Activated naive CD8-positive, alpha-beta T cell treated with anti-CD3 and anti-CD28 coated beads, Interleukin-2, amount 10 ng/mL, durations not matched to agents 7 days and 5 days (primary cell): ENCODE measurements at regions of chr17 and their contacts with region 1.

Region 1: DNA sequence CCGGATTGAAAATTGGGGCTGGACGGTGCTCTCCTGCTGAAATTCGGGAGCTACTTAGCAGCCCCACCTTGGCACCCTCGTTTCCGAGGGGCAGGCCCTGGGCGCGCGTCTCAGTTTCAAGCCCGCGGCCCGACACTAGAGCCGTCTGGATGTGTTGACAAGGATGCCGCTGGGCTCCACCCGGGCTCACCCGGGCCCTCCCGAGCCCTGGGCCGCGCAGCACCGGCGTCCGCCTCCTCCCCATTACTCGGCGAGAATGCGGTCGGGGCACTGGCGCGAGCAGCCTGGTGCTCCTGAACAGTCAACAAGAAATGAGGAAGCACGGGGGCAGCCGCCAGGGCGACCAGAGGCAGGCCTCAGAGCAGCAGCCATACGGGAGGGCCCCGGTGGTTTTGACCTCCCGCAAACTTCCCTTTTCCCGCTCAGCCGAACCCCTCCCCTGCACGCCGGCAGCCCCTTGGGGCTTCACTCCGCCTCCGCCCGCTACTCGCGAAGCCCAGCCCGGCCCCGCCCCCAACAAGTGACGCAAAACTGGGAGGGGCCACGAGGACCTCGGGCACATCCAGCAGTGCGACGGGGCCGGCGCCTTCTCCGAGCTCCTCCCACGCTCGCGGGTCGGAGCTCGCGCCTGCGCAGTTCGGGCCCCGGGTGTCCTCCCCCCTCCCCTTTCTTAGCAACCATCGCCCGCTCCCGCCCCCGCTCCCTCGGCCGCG is 447 bp upstream of the SEC14L1 start:
- DNase-seq: peak; percentile 100
- ATAC-seq: peak; percentile 88
- H3K4me3 Mint-ChIP-seq: peak overlapping the region; percentile 74
- H3K27ac Mint-ChIP-seq: peak overlapping the region; percentile 89
- H3K4me1 Mint-ChIP-seq: peaks cover 49% of the 10 kb centered on the region
- H3K27me3 Mint-ChIP-seq: no peaks in the 10 kb centered on the region

Region 2: GRCh38 chr17:77076124-77076872 is 64.0 kb before region 1 on chr17:
- POLR2A ChIA-PET with region 1: no interaction called
- DNase-seq: no peak
- ATAC-seq: no peak
- H3K4me3 Mint-ChIP-seq: no peak overlapping the region
- H3K27ac Mint-ChIP-seq: no peak overlapping the region
- H3K4me1 Mint-ChIP-seq: no peaks in the 10 kb centered on the region
- H3K27me3 Mint-ChIP-seq: peaks cover 40% of the 10 kb centered on the region

Region 3: DNA sequence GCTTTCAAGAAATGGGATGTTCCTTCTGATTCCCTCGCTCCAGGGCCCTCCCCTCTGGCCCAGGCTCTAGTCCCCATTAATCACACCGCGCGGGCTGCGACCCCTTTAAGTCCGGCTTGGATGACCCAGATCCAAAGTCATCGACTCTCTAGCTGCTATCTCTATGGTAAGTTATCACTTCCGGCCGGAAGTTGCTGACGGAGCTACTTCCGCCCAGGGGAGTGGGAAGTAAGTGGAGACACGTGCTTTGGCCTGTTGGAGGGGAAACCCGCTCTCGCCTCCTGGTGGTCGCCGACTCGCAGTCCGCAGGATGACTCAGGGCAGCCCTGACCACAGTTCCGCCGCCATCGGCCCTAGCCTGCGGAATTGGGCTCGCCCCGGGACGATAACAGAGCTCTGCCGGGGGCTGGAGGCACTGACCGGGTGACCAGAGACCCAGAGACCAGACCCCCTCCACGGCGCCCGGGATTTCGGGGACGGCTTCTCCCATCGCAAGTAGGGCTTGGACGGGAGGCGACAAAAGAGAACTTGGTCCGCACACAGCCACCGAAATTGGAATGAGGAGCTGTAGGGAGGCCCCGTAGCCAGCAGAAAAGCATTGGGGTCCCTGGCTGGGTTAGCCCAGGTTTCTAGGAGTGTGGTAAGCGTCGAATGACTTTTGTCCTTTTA is 51.7 kb before region 1 on chr17:
- POLR2A ChIA-PET with region 1: interaction called, 11 read pairs
- DNase-seq: peak; percentile 82
- ATAC-seq: peak; percentile 87
- H3K4me3 Mint-ChIP-seq: peak overlapping the region; percentile 83
- H3K27ac Mint-ChIP-seq: peak overlapping the region; percentile 93
- H3K4me1 Mint-ChIP-seq: peaks cover 39% of the 10 kb centered on the region
- H3K27me3 Mint-ChIP-seq: peaks cover 10% of the 10 kb centered on the region

Region 4: DNA sequence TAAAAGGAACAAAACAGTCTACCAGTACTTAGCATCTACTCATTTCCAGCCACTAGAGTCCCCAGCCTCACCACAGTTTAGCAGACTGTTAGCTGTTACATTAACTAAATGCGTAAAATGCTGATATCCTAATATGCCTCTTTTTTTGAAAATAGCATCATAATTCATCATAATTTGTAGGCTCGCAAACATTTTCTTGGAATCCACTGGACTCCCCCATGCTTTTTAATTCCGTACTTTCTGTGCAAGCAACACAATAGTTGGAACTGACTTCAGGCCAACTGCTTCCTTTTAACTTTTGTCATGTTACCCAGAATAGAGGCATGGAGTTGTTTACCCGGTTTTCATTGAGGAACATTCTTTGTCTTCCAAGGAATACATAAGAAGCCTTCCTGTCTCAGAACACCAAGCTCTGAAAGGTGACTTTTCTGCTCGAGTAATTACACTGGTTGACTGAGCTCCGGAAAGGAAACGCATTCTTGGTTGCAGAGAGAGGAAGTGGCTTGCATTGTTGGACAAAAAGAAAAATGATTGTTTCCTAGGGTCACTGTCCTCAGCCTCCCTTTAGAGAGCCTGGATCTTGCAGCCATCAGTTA is 30.5 kb before region 1 on chr17:
- POLR2A ChIA-PET with region 1: interaction called, 25 read pairs
- DNase-seq: no peak
- ATAC-seq: no peak
- H3K4me3 Mint-ChIP-seq: peak overlapping the region; percentile 72
- H3K27ac Mint-ChIP-seq: peak overlapping the region; percentile 83
- H3K4me1 Mint-ChIP-seq: peaks cover 46% of the 10 kb centered on the region
- H3K27me3 Mint-ChIP-seq: no peaks in the 10 kb centered on the region

Region 5: DNA sequence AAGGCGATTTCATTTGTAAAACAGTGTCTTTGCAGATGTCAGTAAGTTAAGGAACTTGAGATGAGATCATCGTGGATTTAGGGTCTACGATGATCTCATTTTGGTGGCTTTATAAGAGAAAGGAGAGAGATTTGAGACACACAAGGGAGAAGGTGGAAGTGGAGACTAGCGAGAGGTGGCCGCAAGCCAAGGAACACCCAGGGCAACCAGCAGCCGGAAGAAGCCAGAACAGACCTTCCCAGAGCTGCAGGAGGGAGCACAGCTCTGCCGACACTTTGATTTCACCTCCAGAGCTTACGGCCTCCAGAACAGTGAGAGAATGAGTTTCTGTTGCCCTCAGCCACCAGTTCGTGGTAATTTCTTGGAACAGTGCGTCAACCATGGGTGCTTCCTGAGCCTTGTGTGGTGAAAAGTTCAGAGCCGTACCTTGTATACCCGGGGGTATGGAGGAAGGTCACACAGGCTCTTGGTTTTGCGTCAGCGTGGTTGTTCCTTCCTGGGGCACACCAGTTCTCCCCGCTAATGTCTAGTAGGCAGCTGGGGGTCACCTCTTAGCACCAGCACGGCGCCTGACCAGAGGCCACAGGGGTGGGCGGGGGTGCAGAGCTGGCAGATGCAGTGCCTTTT is 12.5 kb before region 1 on chr17:
- POLR2A ChIA-PET with region 1: interaction called, 100 read pairs
- DNase-seq: peak; percentile 73
- ATAC-seq: peak; percentile 95
- H3K4me3 Mint-ChIP-seq: peak overlapping the region; percentile 76
- H3K27ac Mint-ChIP-seq: peak overlapping the region; percentile 93
- H3K4me1 Mint-ChIP-seq: peaks cover 37% of the 10 kb centered on the region
- H3K27me3 Mint-ChIP-seq: no peaks in the 10 kb centered on the region

Region 6: GRCh38 chr17:77182205-77183172 is 42.2 kb after region 1 on chr17:
- POLR2A ChIA-PET with region 1: interaction called, 11 read pairs
- DNase-seq: no peak
- ATAC-seq: no peak
- H3K4me3 Mint-ChIP-seq: peak overlapping the region; percentile 76
- H3K27ac Mint-ChIP-seq: peak overlapping the region; percentile 84
- H3K4me1 Mint-ChIP-seq: peaks cover 44% of the 10 kb centered on the region
- H3K27me3 Mint-ChIP-seq: no peaks in the 10 kb centered on the region

Region 7: DNA sequence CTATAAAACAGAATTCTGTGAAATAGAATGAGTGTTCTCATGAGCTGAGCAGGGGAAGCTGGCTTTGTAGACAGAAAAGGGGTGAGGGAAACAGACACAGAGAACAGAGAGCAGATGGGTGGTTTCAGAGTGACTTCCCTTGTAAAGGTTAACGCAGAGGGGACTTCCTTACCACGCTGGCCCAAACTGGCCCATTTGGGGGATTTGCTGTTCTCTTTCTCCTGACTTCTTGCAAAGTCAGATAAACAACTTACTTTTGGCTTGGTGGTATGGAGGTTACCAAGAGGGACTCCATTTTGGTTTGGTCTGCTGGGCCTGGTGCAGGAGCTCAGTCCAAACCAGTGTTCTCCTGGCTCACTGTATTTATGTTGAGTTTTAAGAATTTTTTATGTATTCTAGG is 48.8 kb after region 1 on chr17:
- POLR2A ChIA-PET with region 1: interaction called, 16 read pairs
- DNase-seq: peak; percentile 48
- ATAC-seq: peak; percentile 76
- H3K4me3 Mint-ChIP-seq: peak overlapping the region; percentile 52
- H3K27ac Mint-ChIP-seq: peak overlapping the region; percentile 76
- H3K4me1 Mint-ChIP-seq: peaks cover 36% of the 10 kb centered on the region
- H3K27me3 Mint-ChIP-seq: no peaks in the 10 kb centered on the region

Region 8: DNA sequence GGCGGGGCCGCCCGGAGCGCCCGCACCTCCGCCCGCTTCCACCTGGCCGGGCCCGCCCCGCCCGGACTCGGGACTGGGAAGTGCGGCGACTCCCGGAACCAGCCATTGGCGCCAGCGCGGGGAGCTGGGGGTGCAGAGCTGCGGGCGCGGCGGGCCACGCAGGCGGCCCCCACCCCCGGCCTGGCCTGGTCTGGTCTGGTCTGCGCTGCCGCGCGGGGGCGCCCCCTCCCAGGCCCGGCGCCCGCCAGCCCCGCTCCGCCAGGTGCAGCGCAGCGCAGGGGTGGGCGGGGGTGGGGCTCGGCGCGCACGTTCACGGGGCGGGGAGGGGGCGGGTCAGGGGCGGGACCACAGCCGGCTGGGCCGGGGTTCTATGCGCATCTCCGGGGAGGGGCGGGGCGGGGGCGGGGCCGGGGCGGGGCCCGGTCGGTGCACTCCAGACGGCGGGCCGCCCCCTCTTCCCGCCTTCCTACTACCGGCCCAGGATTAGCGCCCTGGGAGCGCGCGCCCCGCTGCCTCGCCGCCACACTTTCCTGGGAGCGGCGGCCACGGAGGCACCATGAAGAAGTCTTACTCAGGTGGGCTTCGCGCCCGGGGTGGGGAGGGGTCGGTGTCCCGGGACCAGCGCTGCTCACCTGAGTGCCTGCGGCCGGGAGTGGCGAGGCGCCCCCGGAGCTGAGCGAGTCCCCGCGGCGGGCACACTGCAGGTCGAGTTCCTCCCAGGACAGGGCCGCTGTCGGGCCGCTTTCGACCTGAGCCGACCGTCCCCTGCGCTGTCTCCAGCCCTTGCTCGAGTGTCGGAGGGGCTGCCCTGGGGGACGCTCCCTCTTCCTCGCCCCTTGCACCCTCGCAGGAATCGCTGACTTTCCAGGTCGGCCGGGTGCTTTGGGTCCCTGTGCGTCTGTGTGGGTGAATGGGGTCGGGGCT is 140.9 kb after region 1 on chr17:
- POLR2A ChIA-PET with region 1: no interaction called
- DNase-seq: peak; percentile 84
- ATAC-seq: peak; percentile 90
- H3K4me3 Mint-ChIP-seq: peak overlapping the region; percentile 77
- H3K27ac Mint-ChIP-seq: no peak overlapping the region
- H3K4me1 Mint-ChIP-seq: peaks cover 9% of the 10 kb centered on the region
- H3K27me3 Mint-ChIP-seq: peaks cover 41% of the 10 kb centered on the region

Region 9: DNA sequence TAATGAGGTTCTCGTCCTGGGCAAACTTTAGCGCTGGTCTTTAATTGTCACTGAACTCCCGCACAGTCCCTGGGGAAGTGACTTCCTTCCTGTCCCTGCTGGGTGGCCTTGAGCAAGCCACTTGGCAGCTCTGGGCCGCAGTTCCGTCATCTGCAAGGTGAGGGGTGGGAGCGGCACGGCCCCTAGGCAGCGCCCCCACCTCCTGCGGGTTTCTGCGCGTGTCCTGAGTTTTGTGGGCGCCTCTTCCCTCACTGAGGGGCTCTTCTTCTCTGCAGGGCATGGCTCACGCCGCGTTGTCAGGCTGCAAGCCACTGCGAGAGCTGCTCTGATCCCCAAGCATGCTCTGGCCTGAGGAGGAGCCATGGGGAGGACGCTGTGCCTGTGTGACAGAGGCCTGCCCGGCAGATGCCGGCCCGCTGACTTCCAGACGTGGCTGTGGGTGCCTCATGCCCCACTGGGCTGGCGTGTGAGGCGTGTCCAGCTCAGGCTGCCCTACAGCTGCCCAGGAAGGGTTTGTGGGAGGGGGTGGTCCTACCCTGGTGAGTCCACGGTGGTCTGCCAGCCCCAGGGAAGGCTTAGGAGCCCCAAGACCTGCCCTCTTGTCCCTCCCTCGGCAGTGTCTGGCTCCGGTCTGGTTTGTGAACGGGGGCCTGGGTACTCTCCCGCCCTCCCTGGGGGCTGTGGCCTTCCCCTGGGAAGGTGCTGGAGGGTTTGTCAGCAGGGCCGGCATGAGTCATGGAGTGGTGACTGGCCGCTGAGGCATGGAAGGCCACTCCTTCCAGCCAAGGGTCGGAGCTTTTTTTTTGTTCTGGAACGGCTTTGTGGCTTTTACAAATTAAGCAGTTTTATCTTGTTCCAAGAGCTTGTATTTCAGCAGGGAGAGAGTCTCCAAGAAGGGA is 182.4 kb after region 1 on chr17:
- POLR2A ChIA-PET with region 1: no interaction called
- DNase-seq: peak; percentile 30
- ATAC-seq: no peak
- H3K4me3 Mint-ChIP-seq: no peak overlapping the region
- H3K27ac Mint-ChIP-seq: no peak overlapping the region
- H3K4me1 Mint-ChIP-seq: peaks cover 50% of the 10 kb centered on the region
- H3K27me3 Mint-ChIP-seq: no peaks in the 10 kb centered on the region